ENCODE measurements at regions of chr17 and their contacts with region 1.

Region 1: DNA sequence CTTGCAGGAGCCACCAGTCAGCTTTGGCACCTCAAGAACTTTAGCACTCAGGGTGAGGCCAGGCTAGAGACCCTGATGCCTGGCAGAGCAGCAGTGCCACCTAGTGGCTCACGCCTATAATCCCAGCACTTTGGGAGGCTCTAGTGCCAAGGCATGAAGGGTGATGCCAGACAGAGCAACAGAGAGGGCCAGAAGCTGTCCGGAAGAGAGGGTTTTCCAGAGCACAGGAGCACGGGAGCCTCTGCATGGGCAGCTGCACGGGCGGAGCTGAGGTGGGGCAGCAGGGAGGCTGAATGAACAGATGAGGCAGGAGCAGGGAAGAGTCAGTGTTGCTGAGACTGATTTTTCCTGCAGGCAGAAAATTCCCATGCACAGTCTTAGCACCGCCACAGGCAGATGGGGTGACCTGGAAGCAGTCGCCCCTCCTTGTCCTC is 38.9 kb downstream of the MYH3 start:
- DNase-seq: peak; percentile 25 to 61 (median 33)
- H3K4me3 ChIP-seq: no peak overlapping the region
- H3K4me3 Mint-ChIP-seq: no peak overlapping the region
- H3K27ac ChIP-seq: no peak overlapping the region
- H3K27ac Mint-ChIP-seq: no peak overlapping the region
- H3K4me1 ChIP-seq: no peaks in the 10 kb centered on the region
- H3K4me1 Mint-ChIP-seq: peaks cover 0 to 3% (median 0%) of the 10 kb centered on the region in 3 donors
- H3K27me3 ChIP-seq: no peaks in the 10 kb centered on the region
- H3K27me3 Mint-ChIP-seq: peaks cover 6 to 9% of the 10 kb centered on the region in 2 donors

Region 2: GRCh38 chr17:9924735-9925191 is 693.5 kb before region 1 on chr17:
- CTCF ChIA-PET with region 1: interaction called, 14 read pairs
- POLR2A ChIA-PET with region 1: no interaction called
- DNase-seq: peak in 2 of 5 donors; percentile 36 to 39
- H3K4me3 ChIP-seq: no peak overlapping the region
- H3K4me3 Mint-ChIP-seq: no peak overlapping the region
- H3K27ac ChIP-seq: no peak overlapping the region
- H3K27ac Mint-ChIP-seq: peak overlapping the region in 1 of 8 donors; percentile 27
- H3K4me1 ChIP-seq: no peaks in the 10 kb centered on the region
- H3K4me1 Mint-ChIP-seq: peaks cover 2 to 6% (median 4%) of the 10 kb centered on the region in 3 donors
- H3K27me3 ChIP-seq: no peaks in the 10 kb centered on the region
- H3K27me3 Mint-ChIP-seq: no peaks in the 10 kb centered on the region

Region 3: GRCh38 chr17:10631048-10631700 is 13.0 kb after region 1 on chr17:
- CTCF ChIA-PET with region 1: interaction called, 73 read pairs
- POLR2A ChIA-PET with region 1: no interaction called
- DNase-seq: peak in 1 of 5 donors; percentile 18
- H3K4me3 ChIP-seq: no peak overlapping the region
- H3K4me3 Mint-ChIP-seq: no peak overlapping the region
- H3K27ac ChIP-seq: no peak overlapping the region
- H3K27ac Mint-ChIP-seq: peak overlapping the region in 1 of 8 donors; percentile 23
- H3K4me1 ChIP-seq: no peaks in the 10 kb centered on the region
- H3K4me1 Mint-ChIP-seq: peaks cover 0 to 3% (median 3%) of the 10 kb centered on the region in 3 donors
- H3K27me3 ChIP-seq: no peaks in the 10 kb centered on the region
- H3K27me3 Mint-ChIP-seq: no peaks in the 10 kb centered on the region